ENCODE measurements at regions of chr6 and their contacts with region 1.

Region 1: GRCh38 chr6:7561153-7561964 is 19.9 kb downstream of the DSP start:
- DNase-seq: peak; percentile 52
- ATAC-seq: peak; percentile 93

Region 2: GRCh38 chr6:7414811-7415210 is 146.5 kb before region 1 on chr6:
- intact Hi-C with region 1: loop called (anchors 10 kb)
- DNase-seq: no peak
- ATAC-seq: no peak

Measured in left ventricle myocardium superior (tissue), 1 donor.